Esophagus muscularis mucosa (tissue), 4 donors: ENCODE measurements at regions of chr4 and their contacts with region 1.

Region 1: GRCh38 chr4:1693129-1693896 is 9.2 kb upstream of the FAM53A start:
- DNase-seq: no peak
- H3K4me3 ChIP-seq: no peak overlapping the region
- H3K27ac ChIP-seq: no peak overlapping the region
- H3K4me1 ChIP-seq: no peaks in the 10 kb centered on the region
- H3K27me3 ChIP-seq: no peaks in the 10 kb centered on the region
- CTCF ChIP-seq: peak; percentile 85 to 93 (median 90)
- EP300 ChIP-seq: no peak
- POLR2A ChIP-seq: no peak

Region 2: GRCh38 chr4:1721004-1721665 is 27.8 kb after region 1 on chr4 and contains the starts of genes TACC3 and TMEM129:
- intact Hi-C with region 1: loop called (anchors 1 kb)
- DNase-seq: peak; percentile 99
- H3K4me3 ChIP-seq: peak within 1 kb of the TSS; percentile 74 to 96 (median 84)
- H3K27ac ChIP-seq: peak within 1 kb of the TSS; percentile 92 to 99 (median 96)
- H3K4me1 ChIP-seq: peaks cover 41 to 66% (median 54%) of the 10 kb centered on the region in 4 donors
- H3K27me3 ChIP-seq: no peaks in the 10 kb centered on the region
- CTCF ChIP-seq: no peak
- EP300 ChIP-seq: no peak
- POLR2A ChIP-seq: no peak
- total RNA-seq, gene TACC3: 2.5 to 8.8 (median 5.8) TPM
- total RNA-seq, gene TMEM129: 59.3 to 101 (median 72.6) TPM